GM12878 (cell line): ENCODE measurements at regions of chr3 and their contacts with region 1.

Region 1: DNA sequence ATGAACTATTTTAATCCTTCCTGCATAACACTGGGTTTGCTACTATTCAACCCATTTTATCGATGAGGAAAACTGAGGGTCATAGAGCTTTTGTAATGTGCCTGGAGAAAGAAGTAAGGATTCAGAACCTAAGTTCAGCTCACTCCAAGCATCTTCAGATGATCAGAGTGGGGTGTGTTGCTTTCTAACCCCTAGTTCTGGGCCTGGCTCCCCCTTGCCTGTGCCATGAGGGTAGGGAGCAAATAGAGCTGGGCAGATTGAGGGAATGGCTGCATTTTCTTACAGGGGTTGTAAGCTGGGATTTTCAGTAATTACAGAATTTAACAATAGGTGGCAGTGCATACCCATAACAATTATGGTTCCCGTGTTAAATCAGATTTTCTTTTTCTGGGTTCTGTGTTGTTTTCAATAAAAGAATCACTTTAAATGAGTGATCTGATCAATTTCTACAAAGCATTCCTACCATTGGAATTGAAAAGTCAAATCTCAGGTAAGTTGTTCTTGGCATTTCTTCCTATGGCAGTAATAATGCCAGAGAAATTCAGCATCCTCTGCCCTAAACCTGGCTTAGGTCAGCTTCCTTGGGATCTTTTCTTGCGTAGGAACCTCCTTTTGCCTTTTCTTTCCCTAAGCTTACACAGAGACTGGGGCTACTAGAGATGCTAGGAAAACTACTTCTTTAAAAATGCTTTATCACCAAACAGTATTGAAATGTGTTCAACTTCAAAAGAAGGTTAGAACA is 103.8 kb upstream of the IL12A start:
- DNase-seq: no peak
- ATAC-seq: peak; percentile 80
- H3K4me3 ChIP-seq: no peak overlapping the region
- H3K27ac ChIP-seq: no peak overlapping the region
- H3K4me1 ChIP-seq: no peaks in the 10 kb centered on the region
- H3K27me3 ChIP-seq: no peaks in the 10 kb centered on the region
- CTCF ChIP-seq: peak; percentile 40 to 72 (median 56); a peak in 5 of 6 replicates
- EP300 ChIP-seq: no peak
- POLR2A ChIP-seq: no peak
- RAD21 ChIP-seq: peak; percentile 75

Region 2: DNA sequence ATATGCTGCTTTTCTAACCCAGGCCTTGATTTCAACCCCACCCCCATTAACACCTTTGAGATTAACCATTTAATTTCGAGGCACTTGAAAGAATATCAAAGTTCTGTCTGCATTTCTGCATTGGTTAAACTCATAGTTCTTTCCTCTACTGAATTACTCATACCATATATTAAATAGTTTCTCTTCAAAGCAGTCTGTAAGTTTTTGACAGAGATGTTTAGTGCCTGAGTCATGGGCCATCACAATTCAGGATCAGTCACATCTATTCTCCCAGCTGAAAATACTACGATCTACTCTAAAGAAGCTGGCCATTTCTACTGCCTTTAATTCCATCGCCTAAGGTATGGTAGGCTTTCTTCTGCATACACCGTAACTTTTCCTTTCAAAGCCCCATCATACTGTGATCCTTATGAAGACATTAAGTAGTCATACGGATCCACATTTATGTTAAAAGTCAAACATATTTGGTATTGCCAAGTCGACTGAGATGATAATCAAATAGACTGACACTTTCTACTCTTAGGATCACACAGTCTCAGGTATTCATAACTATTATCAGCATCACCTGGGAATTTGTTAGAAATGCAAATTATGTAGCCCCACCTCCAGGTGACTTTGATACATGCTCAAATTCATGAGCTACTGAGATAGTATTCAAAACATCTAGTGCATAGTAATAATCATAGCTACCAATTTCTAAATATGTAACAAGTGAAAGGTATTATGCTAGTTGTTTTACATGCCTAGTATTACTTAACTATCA is 385.6 kb before region 1 on chr3:
- CTCF ChIA-PET with region 1: no interaction called
- POLR2A ChIA-PET with region 1: no interaction called
- RAD21 ChIA-PET with region 1: no interaction called
- SMC1A ChIA-PET with region 1: no interaction called
- in situ Hi-C with region 1: no loop called
- intact Hi-C with region 1: no loop called
- DNase-seq: no peak
- ATAC-seq: no peak
- H3K4me3 ChIP-seq: no peak overlapping the region
- H3K27ac ChIP-seq: no peak overlapping the region
- H3K4me1 ChIP-seq: no peaks in the 10 kb centered on the region
- H3K27me3 ChIP-seq: no peaks in the 10 kb centered on the region
- CTCF ChIP-seq: no peak
- EP300 ChIP-seq: no peak
- POLR2A ChIP-seq: no peak
- RAD21 ChIP-seq: no peak

Region 3: DNA sequence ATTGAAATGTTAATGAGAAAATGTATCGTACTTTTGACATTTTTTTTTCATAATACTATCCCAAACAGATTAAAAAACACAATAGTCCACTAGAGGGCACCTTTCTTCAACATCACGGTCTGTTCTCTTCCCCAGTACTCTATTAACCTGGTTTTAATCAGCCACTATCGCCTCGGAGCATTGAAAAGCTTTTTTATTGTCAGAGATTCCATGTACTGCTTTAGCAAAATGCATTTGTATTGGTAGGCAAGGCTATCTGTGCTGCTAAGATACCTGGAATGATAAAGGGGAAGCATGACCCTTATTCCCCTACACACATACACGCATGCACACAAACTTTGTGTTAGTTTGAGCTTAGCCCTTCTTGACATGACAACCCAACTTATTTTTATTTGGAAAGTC is 56.3 kb before region 1 on chr3:
- CTCF ChIA-PET with region 1: interaction called, 56 read pairs
- POLR2A ChIA-PET with region 1: no interaction called
- RAD21 ChIA-PET with region 1: interaction called, 5 read pairs
- SMC1A ChIA-PET with region 1: interaction called, 5 read pairs
- in situ Hi-C with region 1: no loop called
- intact Hi-C with region 1: loop called (anchors 5 kb)
- DNase-seq: no peak
- ATAC-seq: peak; percentile 82
- H3K4me3 ChIP-seq: no peak overlapping the region
- H3K27ac ChIP-seq: no peak overlapping the region
- H3K4me1 ChIP-seq: peaks cover 13% of the 10 kb centered on the region
- H3K27me3 ChIP-seq: no peaks in the 10 kb centered on the region
- CTCF ChIP-seq: peak; percentile 41 to 52 (median 49); a peak in 5 of 6 replicates
- EP300 ChIP-seq: no peak
- POLR2A ChIP-seq: no peak
- RAD21 ChIP-seq: peak; percentile 55

Region 4: DNA sequence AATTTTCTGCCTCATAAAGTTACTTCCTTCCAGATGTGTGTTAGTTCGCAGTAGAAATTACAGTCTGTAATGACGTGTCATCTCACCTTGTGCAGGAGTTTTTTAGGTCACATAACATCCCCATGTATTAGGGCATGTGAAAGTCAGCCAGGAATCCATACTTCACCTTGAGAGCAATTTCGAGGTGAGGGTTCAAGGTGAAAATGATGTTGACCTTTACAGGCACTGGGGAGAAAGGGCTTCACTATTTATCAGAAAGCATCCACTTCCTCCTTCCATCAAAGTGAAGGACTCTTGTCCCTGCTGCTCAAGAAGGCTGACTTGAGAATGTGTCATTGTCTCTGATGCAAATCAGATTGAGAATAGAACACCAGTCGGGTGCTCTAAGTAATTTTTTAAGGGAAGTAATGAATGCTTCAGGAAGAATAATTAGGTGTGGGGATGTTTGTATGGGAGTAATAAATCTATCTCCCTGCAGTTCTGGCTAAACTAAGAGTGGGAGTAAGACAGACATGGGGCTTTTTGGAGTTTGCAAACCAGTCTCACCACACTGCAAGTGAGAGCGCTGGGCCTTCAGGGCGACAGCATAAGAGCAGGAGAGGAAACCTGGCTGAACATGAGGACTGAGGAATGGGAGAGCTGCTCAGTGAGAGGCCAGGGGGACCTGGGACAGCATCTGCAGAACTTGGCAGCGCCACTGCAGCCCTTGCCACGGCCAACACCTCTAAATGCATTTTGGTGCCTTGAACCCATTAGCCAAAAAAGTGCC is 17.9 kb after region 1 on chr3:
- CTCF ChIA-PET with region 1: interaction called, 152 read pairs
- POLR2A ChIA-PET with region 1: interaction called, 5 read pairs
- RAD21 ChIA-PET with region 1: interaction called, 13 read pairs
- SMC1A ChIA-PET with region 1: interaction called, 168 read pairs
- in situ Hi-C with region 1: no loop called
- intact Hi-C with region 1: no loop called
- DNase-seq: no peak
- ATAC-seq: peak; percentile 78
- H3K4me3 ChIP-seq: no peak overlapping the region
- H3K27ac ChIP-seq: peak overlapping the region; percentile 52
- H3K4me1 ChIP-seq: peaks cover 28% of the 10 kb centered on the region
- H3K27me3 ChIP-seq: no peaks in the 10 kb centered on the region
- CTCF ChIP-seq: no peak
- EP300 ChIP-seq: no peak
- POLR2A ChIP-seq: no peak
- RAD21 ChIP-seq: no peak

Region 5: GRCh38 chr3:159964166-159964973 is 79.5 kb after region 1 on chr3:
- CTCF ChIA-PET with region 1: interaction called, 23 read pairs
- POLR2A ChIA-PET with region 1: no interaction called
- RAD21 ChIA-PET with region 1: interaction called, 8 read pairs
- SMC1A ChIA-PET with region 1: interaction called, 10 read pairs
- in situ Hi-C with region 1: no loop called
- intact Hi-C with region 1: loop called (anchors 2 kb)
- DNase-seq: peak; percentile 74
- ATAC-seq: peak; percentile 97
- H3K4me3 ChIP-seq: peak overlapping the region; percentile 60; the same call in 1 of the 2 replicates
- H3K27ac ChIP-seq: peak overlapping the region; percentile 71
- H3K4me1 ChIP-seq: peaks cover 11% of the 10 kb centered on the region; the same call in 1 of the 2 replicates
- H3K27me3 ChIP-seq: no peaks in the 10 kb centered on the region
- CTCF ChIP-seq: no peak
- EP300 ChIP-seq: peak in 1 of 2 experiments; percentile 92; a peak in 2 of 4 replicates
- POLR2A ChIP-seq: no peak
- RAD21 ChIP-seq: no peak

Region 6: GRCh38 chr3:160003520-160004128 is 118.8 kb after region 1 on chr3:
- CTCF ChIA-PET with region 1: interaction called, 843 read pairs
- POLR2A ChIA-PET with region 1: interaction called, 16 read pairs
- RAD21 ChIA-PET with region 1: interaction called, 387 read pairs
- SMC1A ChIA-PET with region 1: interaction called, 589 read pairs
- in situ Hi-C with region 1: loop called (anchors 5 kb)
- intact Hi-C with region 1: loop called (anchors 1 kb)
- DNase-seq: no peak
- ATAC-seq: peak; percentile 96
- H3K4me3 ChIP-seq: no peak overlapping the region
- H3K27ac ChIP-seq: no peak overlapping the region
- H3K4me1 ChIP-seq: peaks cover 6% of the 10 kb centered on the region; the same call in 1 of the 2 replicates
- H3K27me3 ChIP-seq: no peaks in the 10 kb centered on the region
- CTCF ChIP-seq: peak; percentile 65 to 75 (median 75)
- EP300 ChIP-seq: no peak
- POLR2A ChIP-seq: no peak
- RAD21 ChIP-seq: peak; percentile 81

Region 7: DNA sequence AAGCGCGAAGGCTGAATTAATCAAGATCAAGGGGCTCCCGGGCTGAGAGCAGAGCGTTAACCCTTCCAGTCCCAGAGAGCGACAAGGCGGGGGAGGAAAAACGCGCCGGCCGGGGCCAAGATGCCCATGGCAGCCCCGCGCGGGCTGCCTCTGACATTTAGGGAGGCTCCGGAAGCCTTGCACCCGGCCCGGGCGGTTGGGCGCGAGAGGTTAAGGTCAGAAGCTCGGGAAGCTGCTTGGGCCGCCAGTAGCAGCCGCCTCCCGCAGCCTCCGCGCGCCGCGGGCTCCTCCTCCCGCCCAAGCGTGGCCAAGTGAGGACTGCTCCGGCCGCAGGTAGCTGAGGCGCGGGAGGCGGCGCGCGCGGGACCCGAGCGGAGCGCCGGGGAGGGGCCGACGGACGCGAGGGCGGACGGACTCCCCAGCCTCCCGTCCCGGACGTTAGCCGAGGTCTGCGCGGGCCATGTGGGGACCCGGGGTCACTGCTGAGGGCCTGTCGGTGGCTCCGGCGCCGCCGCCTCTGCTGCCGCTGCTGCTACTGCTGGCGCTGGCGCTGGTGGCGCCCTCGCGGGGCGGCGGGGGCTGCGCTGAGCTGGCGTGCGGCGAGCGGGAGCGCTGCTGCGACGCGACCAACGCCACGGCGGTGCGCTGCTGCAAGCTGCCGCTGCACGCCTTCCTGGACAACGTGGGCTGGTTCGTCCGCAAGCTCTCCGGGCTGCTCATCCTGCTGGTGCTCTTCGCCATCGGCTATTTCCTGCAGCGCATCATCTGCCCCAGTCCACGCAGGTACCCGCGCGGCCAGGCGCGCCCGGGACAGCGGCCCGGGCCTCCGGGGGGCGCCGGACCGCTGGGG is 340.6 kb after region 1 on chr3 and contains the start of gene C3orf80:
- CTCF ChIA-PET with region 1: interaction called, 3 read pairs
- POLR2A ChIA-PET with region 1: no interaction called
- RAD21 ChIA-PET with region 1: no interaction called
- SMC1A ChIA-PET with region 1: no interaction called
- in situ Hi-C with region 1: no loop called
- intact Hi-C with region 1: loop called (anchors 10 kb)
- DNase-seq: no peak
- ATAC-seq: peak; percentile 92
- H3K4me3 ChIP-seq: peak within 1 kb of the TSS; percentile 61
- H3K27ac ChIP-seq: no peak within 1 kb of the TSS
- H3K4me1 ChIP-seq: peaks cover 7% of the 10 kb centered on the region; the same call in 1 of the 2 replicates
- H3K27me3 ChIP-seq: peaks cover 7 to 27% of the 10 kb centered on the region in 2 experiments
- CTCF ChIP-seq: peak in 2 of 3 experiments; percentile 8 to 14; a peak in 2 of 6 replicates
- EP300 ChIP-seq: no peak
- POLR2A ChIP-seq: no peak
- RAD21 ChIP-seq: no peak
- polyA plus RNA-seq, gene C3orf80: 0.02 TPM in 1 of 2 experiments, not detected in the other